ENCODE measurements at regions of chr7 and their contacts with region 1.

Region 1: DNA sequence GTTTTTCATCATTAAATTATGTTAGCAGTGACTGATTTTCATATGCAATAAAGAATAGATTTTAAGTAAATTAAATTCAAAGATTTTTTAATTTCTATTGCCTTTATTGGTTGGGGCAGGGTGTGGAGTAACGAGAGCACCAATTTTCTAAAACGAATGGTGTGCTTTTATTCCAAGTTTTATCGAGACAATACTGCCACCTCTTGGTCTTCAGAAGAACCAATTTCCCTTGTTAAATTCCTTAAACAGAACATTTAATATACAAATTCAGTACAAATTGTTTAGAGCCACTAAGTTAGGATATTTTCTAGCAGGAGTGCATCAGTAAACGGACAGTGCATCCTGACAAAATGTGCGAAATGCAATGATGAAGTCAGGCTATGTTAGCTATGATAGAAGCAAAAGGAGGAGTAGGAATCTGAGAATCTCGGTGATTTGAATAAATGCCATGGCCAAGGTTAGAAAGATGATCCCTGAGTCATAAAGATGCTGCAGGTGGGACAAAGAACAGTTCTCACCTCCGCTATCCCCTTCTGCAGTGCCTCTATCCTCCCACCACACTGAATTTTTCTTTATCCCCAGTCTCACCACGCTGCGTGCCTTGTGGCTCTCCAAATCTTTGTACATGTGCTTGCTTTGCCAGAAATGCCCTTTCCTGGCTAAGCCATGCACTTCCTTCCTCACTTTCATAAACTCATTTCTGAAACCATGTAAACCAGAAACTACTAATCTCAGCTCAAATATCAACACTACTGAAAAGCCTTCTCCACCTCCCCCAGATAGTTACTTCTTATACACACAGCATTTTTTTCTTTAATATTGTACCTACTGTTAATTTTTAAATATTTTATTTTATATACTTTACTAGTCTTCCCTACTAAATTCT is 31.9 kb upstream of the AGBL3 start:
- DNase-seq: peak in 4 of 14 experiments; percentile 15 to 62 (median 51)
- ATAC-seq: peak; percentile 49
- H3K4me3 ChIP-seq: no peak overlapping the region
- H3K4me3 Mint-ChIP-seq: no peak overlapping the region
- H3K27ac ChIP-seq: no peak overlapping the region
- H3K27ac Mint-ChIP-seq: no peak overlapping the region
- H3K4me1 ChIP-seq: no peaks in the 10 kb centered on the region
- H3K4me1 Mint-ChIP-seq: no peaks in the 10 kb centered on the region
- H3K27me3 ChIP-seq: no peaks in the 10 kb centered on the region
- H3K27me3 Mint-ChIP-seq: no peaks in the 10 kb centered on the region
- CTCF ChIP-seq: peak; percentile 77

Region 2: DNA sequence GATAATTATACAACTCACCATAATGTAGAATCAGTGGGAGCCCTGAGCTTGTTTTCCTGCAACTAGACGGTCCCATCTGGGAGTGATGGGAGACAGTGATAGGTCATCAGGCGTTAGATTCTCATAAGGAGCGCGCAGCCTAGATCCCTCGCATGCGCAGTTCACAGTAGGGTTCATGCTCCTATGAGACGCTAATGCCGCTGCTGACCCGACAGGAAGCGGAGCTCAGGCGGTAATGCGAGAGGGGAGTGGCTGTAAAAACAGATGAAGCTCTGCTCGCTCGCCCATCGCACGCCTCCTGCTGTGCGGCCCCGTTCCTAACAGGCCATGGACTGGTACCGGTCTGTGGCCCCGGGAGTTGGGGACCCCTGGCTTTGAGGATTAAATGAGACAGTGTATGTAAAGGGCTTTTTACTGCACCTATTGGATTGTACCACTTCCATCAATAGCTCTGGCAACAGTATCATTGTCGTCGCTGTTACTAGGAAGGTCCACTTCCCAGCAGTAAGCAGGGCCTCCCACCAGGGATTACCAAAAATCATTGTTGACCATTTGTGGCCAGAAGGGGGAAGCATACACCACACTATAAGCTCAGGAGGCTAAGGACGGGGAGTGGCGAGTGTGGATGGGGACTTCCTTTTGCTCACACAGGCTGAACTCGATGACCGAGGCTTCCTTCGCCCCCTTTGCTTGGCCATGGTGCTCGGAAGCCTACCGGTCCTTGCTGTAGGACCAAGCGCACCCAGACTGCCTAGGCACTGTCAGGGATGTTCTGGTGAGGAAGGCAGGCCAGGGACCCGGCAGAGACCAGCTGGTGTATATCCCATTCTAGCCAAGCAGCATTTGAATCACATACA is 521.9 kb before region 1 on chr7:
- CTCF ChIA-PET with region 1: no interaction called
- POLR2A ChIA-PET with region 1: no interaction called
- intact Hi-C with region 1: loop called (anchors 5 to 10 kb)
- DNase-seq: peak; percentile 42 to 88 (median 59)
- ATAC-seq: peak; percentile 92
- H3K4me3 ChIP-seq: peak overlapping the region; percentile 46
- H3K4me3 Mint-ChIP-seq: peak overlapping the region; percentile 82
- H3K27ac ChIP-seq: peak overlapping the region in 1 of 2 donors; percentile 25
- H3K27ac Mint-ChIP-seq: peak overlapping the region; percentile 85
- H3K4me1 ChIP-seq: peaks cover 17% of the 10 kb centered on the region
- H3K4me1 Mint-ChIP-seq: peaks cover 18% of the 10 kb centered on the region
- H3K27me3 ChIP-seq: no peaks in the 10 kb centered on the region
- H3K27me3 Mint-ChIP-seq: no peaks in the 10 kb centered on the region
- CTCF ChIP-seq: peak; percentile 75

Region 3: DNA sequence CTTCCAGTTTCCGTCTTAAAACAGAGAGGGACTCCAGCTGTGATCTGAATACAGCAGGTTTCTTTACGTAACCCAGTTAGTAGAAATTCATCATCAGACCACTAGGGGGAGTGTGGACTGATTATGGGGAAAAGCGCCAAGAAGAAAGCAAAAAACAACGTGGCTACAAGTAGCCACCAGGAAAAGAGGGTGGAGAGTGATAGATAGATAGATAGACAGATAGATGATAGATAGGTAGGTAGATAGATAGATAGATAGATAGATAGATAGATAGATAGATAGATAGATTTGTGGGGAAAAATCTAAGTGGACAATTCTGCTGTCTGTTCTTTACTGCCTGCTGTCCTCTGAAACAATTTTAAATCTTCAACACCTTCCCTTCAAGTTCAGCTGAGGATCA is 439.8 kb before region 1 on chr7:
- CTCF ChIA-PET with region 1: no interaction called
- POLR2A ChIA-PET with region 1: no interaction called
- intact Hi-C with region 1: loop called (anchors 10 kb)
- DNase-seq: peak in 5 of 14 experiments; percentile 7 to 78 (median 65)
- ATAC-seq: peak; percentile 63
- H3K4me3 ChIP-seq: no peak overlapping the region
- H3K4me3 Mint-ChIP-seq: no peak overlapping the region
- H3K27ac ChIP-seq: no peak overlapping the region
- H3K27ac Mint-ChIP-seq: no peak overlapping the region
- H3K4me1 ChIP-seq: no peaks in the 10 kb centered on the region
- H3K4me1 Mint-ChIP-seq: no peaks in the 10 kb centered on the region
- H3K27me3 ChIP-seq: peaks cover 6 to 12% of the 10 kb centered on the region in 2 experiments
- H3K27me3 Mint-ChIP-seq: peaks cover 28% of the 10 kb centered on the region
- CTCF ChIP-seq: peak; percentile 95

Region 4: DNA sequence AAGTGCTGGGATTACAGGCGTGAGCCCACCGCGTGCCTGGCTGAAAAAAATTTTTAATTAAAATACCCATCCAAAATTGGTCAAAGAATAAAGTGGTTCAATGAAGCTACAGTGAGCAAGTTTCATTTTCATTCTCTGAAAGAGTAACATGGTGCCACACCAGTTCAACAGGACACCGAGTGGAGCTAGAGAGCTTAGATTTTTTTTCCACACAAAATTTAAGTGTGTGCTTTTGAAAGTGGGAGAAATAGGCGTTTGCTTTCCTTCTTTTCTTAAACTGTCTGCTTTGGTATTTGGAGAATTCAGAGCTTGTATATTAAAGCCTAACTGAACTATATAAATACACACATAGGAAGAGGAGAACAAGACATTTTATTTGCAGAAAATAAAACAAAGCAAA is 264.4 kb before region 1 on chr7:
- CTCF ChIA-PET with region 1: no interaction called
- POLR2A ChIA-PET with region 1: no interaction called
- intact Hi-C with region 1: loop called in 1 of 2 experiments (anchors 5 kb)
- DNase-seq: no peak
- ATAC-seq: no peak
- H3K4me3 ChIP-seq: no peak overlapping the region
- H3K4me3 Mint-ChIP-seq: no peak overlapping the region
- H3K27ac ChIP-seq: no peak overlapping the region
- H3K27ac Mint-ChIP-seq: no peak overlapping the region
- H3K4me1 ChIP-seq: peaks cover 3% of the 10 kb centered on the region
- H3K4me1 Mint-ChIP-seq: peaks cover 4% of the 10 kb centered on the region
- H3K27me3 ChIP-seq: no peaks in the 10 kb centered on the region
- H3K27me3 Mint-ChIP-seq: no peaks in the 10 kb centered on the region
- CTCF ChIP-seq: no peak

Region 5: DNA sequence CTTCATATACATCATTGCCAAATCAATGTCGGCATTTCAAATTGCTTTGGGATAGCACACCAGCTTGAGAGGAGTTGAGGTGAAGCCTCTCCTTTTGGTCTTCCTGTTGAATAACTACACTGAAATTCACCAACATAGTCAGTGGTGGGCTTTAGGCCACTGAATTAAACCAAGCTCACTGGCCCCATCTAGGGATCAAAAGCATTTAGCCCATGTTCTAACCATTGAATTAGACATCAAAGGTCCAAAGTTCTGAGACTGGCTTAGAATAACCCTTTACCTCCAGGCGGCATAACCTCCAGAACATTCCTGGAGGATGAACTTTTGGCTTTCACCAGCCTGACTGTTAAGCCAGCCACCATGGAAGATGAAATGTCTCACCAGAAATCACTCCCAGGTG is 253.2 kb before region 1 on chr7:
- CTCF ChIA-PET with region 1: no interaction called
- POLR2A ChIA-PET with region 1: no interaction called
- intact Hi-C with region 1: loop called in 1 of 2 experiments (anchors 5 kb)
- DNase-seq: peak in 9 of 14 experiments; percentile 5 to 63 (median 24)
- ATAC-seq: peak; percentile 73
- H3K4me3 ChIP-seq: no peak overlapping the region
- H3K4me3 Mint-ChIP-seq: no peak overlapping the region
- H3K27ac ChIP-seq: no peak overlapping the region
- H3K27ac Mint-ChIP-seq: no peak overlapping the region
- H3K4me1 ChIP-seq: no peaks in the 10 kb centered on the region
- H3K4me1 Mint-ChIP-seq: no peaks in the 10 kb centered on the region
- H3K27me3 ChIP-seq: no peaks in the 10 kb centered on the region
- H3K27me3 Mint-ChIP-seq: no peaks in the 10 kb centered on the region
- CTCF ChIP-seq: peak; percentile 59

Region 6: GRCh38 chr7:134710859-134711624 is 243.4 kb before region 1 on chr7:
- CTCF ChIA-PET with region 1: no interaction called
- POLR2A ChIA-PET with region 1: no interaction called
- intact Hi-C with region 1: loop called in 1 of 2 experiments (anchors 5 kb)
- DNase-seq: peak; percentile 31 to 88 (median 61)
- ATAC-seq: peak; percentile 94
- H3K4me3 ChIP-seq: no peak overlapping the region
- H3K4me3 Mint-ChIP-seq: peak overlapping the region; percentile 25
- H3K27ac ChIP-seq: peak overlapping the region; percentile 68 to 73
- H3K27ac Mint-ChIP-seq: peak overlapping the region; percentile 84
- H3K4me1 ChIP-seq: peaks cover 13% of the 10 kb centered on the region
- H3K4me1 Mint-ChIP-seq: peaks cover 18% of the 10 kb centered on the region
- H3K27me3 ChIP-seq: no peaks in the 10 kb centered on the region
- H3K27me3 Mint-ChIP-seq: no peaks in the 10 kb centered on the region
- CTCF ChIP-seq: no peak

Region 7: GRCh38 chr7:134750083-134751062 is 204.1 kb before region 1 on chr7:
- CTCF ChIA-PET with region 1: no interaction called
- POLR2A ChIA-PET with region 1: no interaction called
- intact Hi-C with region 1: loop called (anchors 2 kb)
- DNase-seq: peak; percentile 49 to 86 (median 62)
- ATAC-seq: peak; percentile 82
- H3K4me3 ChIP-seq: no peak overlapping the region
- H3K4me3 Mint-ChIP-seq: no peak overlapping the region
- H3K27ac ChIP-seq: no peak overlapping the region
- H3K27ac Mint-ChIP-seq: no peak overlapping the region
- H3K4me1 ChIP-seq: no peaks in the 10 kb centered on the region
- H3K4me1 Mint-ChIP-seq: no peaks in the 10 kb centered on the region
- H3K27me3 ChIP-seq: no peaks in the 10 kb centered on the region
- H3K27me3 Mint-ChIP-seq: no peaks in the 10 kb centered on the region
- CTCF ChIP-seq: peak; percentile 85

Measured in CD4-positive, alpha-beta T cell (primary cell).